H1 (cell line): ENCODE measurements at regions of chr11 and their contacts with region 1.

Region 1: GRCh38 chr11:116420770-116421528 is 351.8 kb downstream of the BUD13 start:
- DNase-seq: no peak
- H3K4me3 ChIP-seq: no peak overlapping the region
- H3K27ac ChIP-seq: no peak overlapping the region
- H3K4me1 ChIP-seq: peaks cover 1 to 16% (median 7%) of the 10 kb centered on the region in 4 experiments; a peak in 5 of 7 replicates
- H3K27me3 ChIP-seq: no peaks in the 10 kb centered on the region
- CTCF ChIP-seq: no peak
- EP300 ChIP-seq: no peak
- POLR2A ChIP-seq: no peak
- RAD21 ChIP-seq: no peak

Region 2: GRCh38 chr11:116096272-116096995 is 324.5 kb before region 1 on chr11:
- CTCF ChIA-PET with region 1: no interaction called
- POLR2A ChIA-PET with region 1: no interaction called
- DNase-seq: no peak
- H3K4me3 ChIP-seq: no peak overlapping the region
- H3K27ac ChIP-seq: no peak overlapping the region
- H3K4me1 ChIP-seq: peaks cover 0 to 3% (median 0%) of the 10 kb centered on the region in 4 experiments; a peak in 1 of 7 replicates
- H3K27me3 ChIP-seq: peaks cover 0 to 4% (median 1%) of the 10 kb centered on the region in 4 experiments; a peak in 2 of 7 replicates
- CTCF ChIP-seq: no peak
- EP300 ChIP-seq: no peak
- POLR2A ChIP-seq: no peak
- RAD21 ChIP-seq: no peak

Region 3: GRCh38 chr11:116373104-116373944 is 47.6 kb before region 1 on chr11:
- CTCF ChIA-PET with region 1: interaction called, 10 read pairs
- POLR2A ChIA-PET with region 1: no interaction called
- DNase-seq: no peak
- H3K4me3 ChIP-seq: no peak overlapping the region
- H3K27ac ChIP-seq: no peak overlapping the region
- H3K4me1 ChIP-seq: no peaks in the 10 kb centered on the region; a peak in 1 of 7 replicates
- H3K27me3 ChIP-seq: no peaks in the 10 kb centered on the region
- CTCF ChIP-seq: no peak
- EP300 ChIP-seq: no peak
- POLR2A ChIP-seq: no peak
- RAD21 ChIP-seq: no peak